ENCODE measurements at regions of chr1 and their contacts with region 1.

Region 1: GRCh38 chr1:178052650-178053461 is 41.0 kb upstream of the RASAL2 start:
- DNase-seq: peak; percentile 48
- H3K4me3 ChIP-seq: no peak overlapping the region
- H3K27ac ChIP-seq: peak overlapping the region; percentile 66
- H3K4me1 ChIP-seq: peaks cover 43% of the 10 kb centered on the region
- H3K27me3 ChIP-seq: no peaks in the 10 kb centered on the region
- CTCF ChIP-seq: no peak
- POLR2A ChIP-seq: no peak

Region 2: DNA sequence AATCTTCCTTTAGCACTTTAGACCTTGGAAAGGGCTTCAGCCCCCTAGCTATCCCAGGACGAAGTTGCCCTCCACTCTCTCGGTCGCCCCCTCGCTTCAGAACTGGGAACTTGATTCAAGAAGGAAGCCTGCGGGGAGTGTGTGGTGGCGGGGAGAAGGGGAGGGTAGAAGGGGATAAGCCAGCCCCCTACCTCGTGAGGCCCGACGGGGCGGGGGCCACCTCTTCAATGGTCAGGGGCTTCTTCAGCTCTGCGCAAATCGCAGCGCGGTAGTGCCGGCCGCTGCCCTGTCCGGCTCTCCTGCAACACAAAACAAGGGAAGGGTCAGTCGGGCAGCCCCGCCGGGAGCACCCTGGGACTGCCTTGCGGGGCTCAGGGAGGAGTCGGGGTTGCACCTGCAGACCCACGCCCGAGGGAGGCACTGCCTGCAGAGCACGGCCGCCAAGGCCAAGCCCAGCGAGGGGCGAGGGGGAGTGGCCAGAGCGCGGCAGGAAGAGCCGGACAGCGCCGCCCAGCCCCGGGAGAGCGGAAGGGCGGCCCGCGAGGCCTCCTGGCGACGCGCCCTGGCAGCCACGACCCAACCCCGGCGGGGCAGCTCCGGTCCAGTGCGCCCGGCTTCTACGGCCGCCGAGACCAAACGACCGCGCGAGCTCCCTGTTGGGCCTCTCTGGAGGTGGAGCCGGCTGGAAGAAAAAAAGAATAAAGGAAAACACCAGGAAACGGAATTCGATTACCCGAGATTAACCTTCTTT is 15.2 kb before region 1 on chr1:
- CTCF ChIA-PET with region 1: interaction called, 26 read pairs
- POLR2A ChIA-PET with region 1: no interaction called
- dilution Hi-C with region 1: no loop called
- intact Hi-C with region 1: loop called (anchors 1 kb)
- DNase-seq: peak; percentile 76
- H3K4me3 ChIP-seq: peak overlapping the region; percentile 45 to 51 (median 48)
- H3K27ac ChIP-seq: peak overlapping the region; percentile 41
- H3K4me1 ChIP-seq: no peaks in the 10 kb centered on the region
- H3K27me3 ChIP-seq: no peaks in the 10 kb centered on the region
- CTCF ChIP-seq: peak; percentile 26 to 42
- POLR2A ChIP-seq: peak; percentile 66